ENCODE measurements at regions of chr20 and their contacts with region 1.

Region 1: GRCh38 chr20:2752567-2753460 is 47.6 kb downstream of the CPXM1 start:
- DNase-seq: peak in 13 of 14 experiments; percentile 19 to 76 (median 47)
- ATAC-seq: peak; percentile 37
- H3K4me3 ChIP-seq: peak overlapping the region; percentile 60
- H3K4me3 Mint-ChIP-seq: peak overlapping the region; percentile 90
- H3K27ac ChIP-seq: no peak overlapping the region
- H3K27ac Mint-ChIP-seq: no peak overlapping the region
- H3K4me1 ChIP-seq: peaks cover 40% of the 10 kb centered on the region
- H3K4me1 Mint-ChIP-seq: peaks cover 28% of the 10 kb centered on the region
- H3K27me3 ChIP-seq: peaks cover 12 to 13% of the 10 kb centered on the region in 2 experiments
- H3K27me3 Mint-ChIP-seq: peaks cover 17% of the 10 kb centered on the region
- CTCF ChIP-seq: peak; percentile 81

Region 2: GRCh38 chr20:3000852-3001523 is 248.2 kb after region 1 on chr20:
- CTCF ChIA-PET with region 1: no interaction called
- POLR2A ChIA-PET with region 1: no interaction called
- intact Hi-C with region 1: loop called in 1 of 2 experiments (anchors 5 kb)
- DNase-seq: peak in 4 of 14 experiments; percentile 7 to 65 (median 56)
- ATAC-seq: peak; percentile 89
- H3K4me3 ChIP-seq: no peak overlapping the region
- H3K4me3 Mint-ChIP-seq: no peak overlapping the region
- H3K27ac ChIP-seq: no peak overlapping the region
- H3K27ac Mint-ChIP-seq: no peak overlapping the region
- H3K4me1 ChIP-seq: no peaks in the 10 kb centered on the region
- H3K4me1 Mint-ChIP-seq: no peaks in the 10 kb centered on the region
- H3K27me3 ChIP-seq: no peaks in the 10 kb centered on the region
- H3K27me3 Mint-ChIP-seq: no peaks in the 10 kb centered on the region
- CTCF ChIP-seq: peak; percentile 60

Measured in CD4-positive, alpha-beta T cell (primary cell).